Mammary epithelial cell (primary cell): ENCODE measurements at regions of chr13 and their contacts with region 1.

Region 1: GRCh38 chr13:38349390-38350113 is at the start of gene UFM1:
- DNase-seq: peak; percentile 90
- H3K4me3 ChIP-seq: peak within 1 kb of the TSS; percentile 68 to 90 (median 74)
- H3K27ac ChIP-seq: peak within 1 kb of the TSS; percentile 98
- H3K4me1 ChIP-seq: peaks cover 21% of the 10 kb centered on the region
- H3K27me3 ChIP-seq: no peaks in the 10 kb centered on the region
- CTCF ChIP-seq: no peak
- total RNA-seq, gene UFM1: 67.4 to 97.5 TPM

Region 2: GRCh38 chr13:38202740-38203139 is 146.8 kb before region 1 on chr13:
- CTCF ChIA-PET with region 1: no interaction called
- dilution Hi-C with region 1: no loop called
- in situ Hi-C with region 1: no loop called
- intact Hi-C with region 1: no loop called
- DNase-seq: peak; percentile 78
- H3K4me3 ChIP-seq: no peak overlapping the region
- H3K27ac ChIP-seq: no peak overlapping the region
- H3K4me1 ChIP-seq: no peaks in the 10 kb centered on the region
- H3K27me3 ChIP-seq: no peaks in the 10 kb centered on the region
- CTCF ChIP-seq: no peak

Region 3: GRCh38 chr13:38255296-38255995 is 94.1 kb before region 1 on chr13:
- CTCF ChIA-PET with region 1: no interaction called
- dilution Hi-C with region 1: no loop called
- in situ Hi-C with region 1: no loop called
- intact Hi-C with region 1: no loop called
- DNase-seq: no peak
- H3K4me3 ChIP-seq: no peak overlapping the region
- H3K27ac ChIP-seq: no peak overlapping the region
- H3K4me1 ChIP-seq: no peaks in the 10 kb centered on the region
- H3K27me3 ChIP-seq: no peaks in the 10 kb centered on the region
- CTCF ChIP-seq: no peak

Region 4: DNA sequence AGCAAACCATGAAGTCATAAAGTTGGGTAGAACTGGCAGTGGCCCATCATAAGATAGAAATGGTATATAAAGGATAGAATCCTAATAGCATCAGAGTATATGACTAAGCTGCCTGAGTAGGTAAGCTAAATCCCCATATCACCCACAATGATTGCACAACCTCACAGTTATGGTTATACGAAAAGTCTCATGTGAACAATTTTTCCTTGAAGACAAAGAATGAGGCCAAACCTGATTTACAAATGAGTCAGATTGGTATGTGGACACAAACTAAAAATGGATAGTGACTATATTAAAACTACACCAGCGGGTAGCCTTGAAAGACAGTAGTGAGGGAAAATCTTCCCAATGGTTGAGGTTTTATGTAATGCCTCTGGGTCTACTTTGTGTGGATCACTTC is 40.8 kb before region 1 on chr13:
- CTCF ChIA-PET with region 1: no interaction called
- dilution Hi-C with region 1: no loop called
- in situ Hi-C with region 1: no loop called
- intact Hi-C with region 1: loop called (anchors 1 kb)
- DNase-seq: peak; percentile 98
- H3K4me3 ChIP-seq: peak overlapping the region in 1 of 3 experiments; percentile 2
- H3K27ac ChIP-seq: peak overlapping the region; percentile 78
- H3K4me1 ChIP-seq: peaks cover 19% of the 10 kb centered on the region
- H3K27me3 ChIP-seq: no peaks in the 10 kb centered on the region
- CTCF ChIP-seq: no peak

Region 5: DNA sequence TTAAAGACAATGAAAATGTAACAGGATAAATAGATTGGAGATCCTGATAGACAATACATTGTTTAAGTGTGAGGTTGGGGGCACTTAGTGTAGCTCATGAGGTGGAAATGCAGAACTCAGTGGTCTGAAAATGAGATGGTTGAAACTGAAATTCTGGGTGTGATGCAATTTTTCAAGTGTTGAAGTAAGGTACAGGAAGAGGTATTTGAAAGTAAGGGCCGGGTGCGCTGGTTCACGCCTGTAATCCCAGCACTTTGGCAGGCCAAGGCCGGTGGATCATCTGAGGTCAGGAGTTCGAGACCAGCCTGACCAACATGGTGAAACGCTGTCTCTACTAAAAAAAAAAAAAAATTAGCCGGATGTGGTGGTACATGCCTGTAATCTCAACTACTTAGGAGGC is 113.1 kb after region 1 on chr13:
- CTCF ChIA-PET with region 1: interaction called, 3 read pairs
- dilution Hi-C with region 1: no loop called
- in situ Hi-C with region 1: loop called in 1 of 2 experiments (anchors 25 kb)
- intact Hi-C with region 1: no loop called
- DNase-seq: no peak
- H3K4me3 ChIP-seq: no peak overlapping the region
- H3K27ac ChIP-seq: no peak overlapping the region
- H3K4me1 ChIP-seq: no peaks in the 10 kb centered on the region
- H3K27me3 ChIP-seq: peaks cover 5% of the 10 kb centered on the region
- CTCF ChIP-seq: no peak